Activated B cell treated with CpG ODN at 0.5 μM for 24 hours (primary cell): ENCODE measurements at regions of chr22 and their contacts with region 1.

Region 1: GRCh38 chr22:41501209-41501608 is 32.3 kb downstream of the ACO2 start:
- DNase-seq: no peak
- ATAC-seq: peak; percentile 88
- H3K4me3 Mint-ChIP-seq: no peak overlapping the region
- H3K27ac Mint-ChIP-seq: peak overlapping the region; percentile 83
- H3K4me1 Mint-ChIP-seq: peaks cover 47% of the 10 kb centered on the region
- H3K27me3 Mint-ChIP-seq: no peaks in the 10 kb centered on the region
- CTCF ChIP-seq: no peak

Region 2: DNA sequence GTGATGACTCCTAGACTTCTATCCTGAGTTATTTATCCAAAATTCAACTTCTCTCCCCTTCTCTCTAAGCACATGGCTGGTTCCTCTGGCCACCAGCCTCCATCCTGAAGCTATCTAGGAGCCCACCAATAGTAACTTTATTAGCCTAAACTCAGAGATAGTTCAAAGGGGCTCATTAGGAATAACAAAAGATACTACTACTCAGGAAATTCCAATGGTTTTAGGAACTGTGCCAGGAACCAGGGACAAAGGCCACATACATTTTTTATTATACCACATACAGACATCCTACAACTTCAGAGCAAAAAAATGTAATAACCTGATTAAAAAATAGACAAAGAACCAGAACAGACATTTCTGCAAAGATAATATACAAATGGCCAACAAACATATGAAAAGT is 710.0 kb before region 1 on chr22:
- CTCF ChIA-PET with region 1: no interaction called
- POLR2A ChIA-PET with region 1: no interaction called
- intact Hi-C with region 1: no loop called
- DNase-seq: no peak
- ATAC-seq: no peak
- H3K4me3 Mint-ChIP-seq: no peak overlapping the region
- H3K27ac Mint-ChIP-seq: no peak overlapping the region
- H3K4me1 Mint-ChIP-seq: peaks cover 14% of the 10 kb centered on the region
- H3K27me3 Mint-ChIP-seq: no peaks in the 10 kb centered on the region
- CTCF ChIP-seq: no peak

Region 3: DNA sequence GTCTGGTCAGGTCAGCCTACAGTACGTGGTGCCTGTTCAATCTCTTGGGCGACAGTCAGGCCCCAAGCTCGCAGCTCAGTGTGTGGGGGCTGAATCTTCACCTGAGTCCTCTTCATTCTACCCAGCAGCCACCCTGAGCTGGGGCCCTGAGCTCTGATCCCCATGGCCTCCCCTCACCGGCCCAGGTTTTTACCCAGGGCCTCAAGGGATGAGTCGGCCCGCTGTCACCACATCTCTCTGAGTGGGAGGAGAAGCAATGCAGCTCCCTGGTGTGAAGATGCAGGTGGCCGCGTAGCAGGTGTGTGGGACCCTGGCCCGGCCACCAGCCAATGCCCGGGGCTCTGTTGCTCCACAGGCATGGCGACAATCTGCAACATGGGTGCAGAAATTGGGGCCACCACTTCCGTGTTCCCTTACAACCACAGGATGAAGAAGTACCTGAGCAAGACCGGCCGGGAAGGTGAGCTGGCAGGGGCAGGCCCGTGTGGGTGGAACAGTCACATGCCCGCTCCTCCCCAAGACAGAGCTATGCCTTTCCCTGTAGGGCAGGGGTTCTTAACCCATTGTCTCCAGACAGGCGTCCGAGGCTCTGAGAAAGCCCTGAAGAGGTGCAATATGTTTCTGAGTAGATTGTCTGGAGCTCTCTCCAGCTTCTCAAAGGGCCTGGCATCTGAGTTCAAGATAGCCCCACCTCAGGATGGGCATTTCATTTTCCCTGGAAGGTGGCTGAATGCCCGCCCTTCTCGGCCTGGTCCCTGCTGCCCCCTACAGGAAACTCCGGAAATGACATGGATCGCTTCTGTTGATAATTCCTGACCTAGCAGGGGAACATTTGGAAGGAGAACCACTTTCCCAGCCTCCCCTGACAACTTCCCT is 16.2 kb after region 1 on chr22:
- CTCF ChIA-PET with region 1: interaction called, 19 read pairs
- POLR2A ChIA-PET with region 1: no interaction called
- intact Hi-C with region 1: no loop called
- DNase-seq: peak; percentile 41
- ATAC-seq: peak; percentile 60
- H3K4me3 Mint-ChIP-seq: no peak overlapping the region
- H3K27ac Mint-ChIP-seq: no peak overlapping the region
- H3K4me1 Mint-ChIP-seq: no peaks in the 10 kb centered on the region
- H3K27me3 Mint-ChIP-seq: no peaks in the 10 kb centered on the region
- CTCF ChIP-seq: no peak

Region 4: GRCh38 chr22:41526837-41527799 is 25.9 kb after region 1 on chr22:
- CTCF ChIA-PET with region 1: interaction called, 3 read pairs
- POLR2A ChIA-PET with region 1: no interaction called
- intact Hi-C with region 1: loop called (anchors 1 kb)
- DNase-seq: peak; percentile 67
- ATAC-seq: peak; percentile 73
- H3K4me3 Mint-ChIP-seq: no peak overlapping the region
- H3K27ac Mint-ChIP-seq: peak overlapping the region; percentile 25
- H3K4me1 Mint-ChIP-seq: peaks cover 19% of the 10 kb centered on the region
- H3K27me3 Mint-ChIP-seq: no peaks in the 10 kb centered on the region
- CTCF ChIP-seq: no peak